A549 (cell line): ENCODE measurements at regions of chr2 and their contacts with region 1.

Region 1: GRCh38 chr2:191811807-191812602 is 34.9 kb downstream of the CAVIN2 start:
- DNase-seq: peak; percentile 31 to 65
- ATAC-seq: peak; percentile 95 to 98
- H3K4me3 ChIP-seq: no peak overlapping the region
- H3K27ac ChIP-seq: peak overlapping the region; percentile 48 to 58; a peak in 4 of 6 replicates
- H3K4me1 ChIP-seq: peaks cover 5% of the 10 kb centered on the region; the same call in 1 of the 3 replicates
- CTCF ChIP-seq: peak; percentile 95
- EP300 ChIP-seq: no peak
- POLR2A ChIP-seq: no peak
- RAD21 ChIP-seq: peak; percentile 99

Region 2: DNA sequence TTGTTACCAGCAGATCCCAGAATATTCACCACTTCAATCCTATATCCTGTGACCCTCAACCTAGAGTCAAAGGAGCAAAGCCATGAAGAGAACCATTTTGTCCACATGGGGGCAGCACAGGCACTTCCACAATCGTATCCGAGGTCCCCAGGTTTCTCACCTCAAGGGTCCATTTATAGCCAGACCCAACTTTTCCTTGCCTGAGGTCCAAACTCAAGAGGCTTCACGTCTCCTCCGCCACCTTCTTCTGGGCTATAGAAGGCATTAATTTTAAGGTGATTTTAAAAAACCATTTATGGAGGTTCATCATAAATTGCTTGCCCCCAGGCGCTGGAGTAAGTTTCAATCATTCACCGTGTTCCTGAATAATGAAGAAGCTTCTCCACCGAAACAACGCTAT is 245.7 kb before region 1 on chr2:
- CTCF ChIA-PET with region 1: interaction called, 11 read pairs
- POLR2A ChIA-PET with region 1: no interaction called
- DNase-seq: peak; percentile 61 to 67
- ATAC-seq: peak; percentile 82 to 92
- H3K4me3 ChIP-seq: no peak overlapping the region
- H3K27ac ChIP-seq: peak overlapping the region in 1 of 2 experiments; percentile 49; a peak in 2 of 6 replicates
- H3K4me1 ChIP-seq: peaks cover 7% of the 10 kb centered on the region
- CTCF ChIP-seq: peak; percentile 89
- EP300 ChIP-seq: no peak
- POLR2A ChIP-seq: no peak
- RAD21 ChIP-seq: peak; percentile 84 to 85

Region 3: GRCh38 chr2:191824398-191824797 is 12.4 kb after region 1 on chr2:
- CTCF ChIA-PET with region 1: interaction called, 32 read pairs
- POLR2A ChIA-PET with region 1: no interaction called
- DNase-seq: no peak
- ATAC-seq: no peak
- H3K4me3 ChIP-seq: no peak overlapping the region
- H3K27ac ChIP-seq: no peak overlapping the region
- H3K4me1 ChIP-seq: no peaks in the 10 kb centered on the region
- CTCF ChIP-seq: no peak
- EP300 ChIP-seq: no peak
- POLR2A ChIP-seq: no peak
- RAD21 ChIP-seq: no peak

Region 4: DNA sequence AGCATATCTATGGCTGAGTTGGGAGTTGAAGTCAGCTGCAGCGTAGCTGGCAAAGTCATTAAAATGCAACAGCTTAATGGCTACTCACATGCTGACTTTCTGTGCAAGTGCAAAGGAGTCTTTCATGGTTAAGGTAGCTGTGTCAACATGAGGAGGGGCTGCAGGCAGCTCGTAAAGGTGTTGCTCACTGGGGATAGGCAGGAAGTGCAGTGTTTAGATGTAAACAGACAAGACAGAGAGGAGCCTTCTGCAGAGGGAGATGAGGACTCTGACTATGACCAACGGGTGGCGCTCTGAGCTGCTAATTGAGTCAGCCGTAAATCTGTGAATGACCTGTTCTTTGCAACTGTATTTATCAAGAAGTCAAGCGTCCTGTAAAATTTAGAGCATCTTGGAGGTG is 57.2 kb after region 1 on chr2:
- CTCF ChIA-PET with region 1: interaction called, 15 read pairs
- POLR2A ChIA-PET with region 1: no interaction called
- DNase-seq: peak in 1 of 2 experiments; percentile 75
- ATAC-seq: peak in 1 of 2 experiments; percentile 41; a peak in 2 of 6 replicates
- H3K4me3 ChIP-seq: no peak overlapping the region
- H3K27ac ChIP-seq: peak overlapping the region; percentile 87 to 91
- H3K4me1 ChIP-seq: peaks cover 57% of the 10 kb centered on the region
- CTCF ChIP-seq: no peak
- EP300 ChIP-seq: no peak
- POLR2A ChIP-seq: no peak
- RAD21 ChIP-seq: peak in 1 of 2 experiments; percentile 71; a peak in 2 of 5 replicates

Region 5: GRCh38 chr2:192155511-192156118 is 343.6 kb after region 1 on chr2:
- CTCF ChIA-PET with region 1: interaction called, 227 read pairs
- POLR2A ChIA-PET with region 1: interaction called, 3 read pairs
- DNase-seq: no peak
- ATAC-seq: no peak
- H3K4me3 ChIP-seq: no peak overlapping the region
- H3K27ac ChIP-seq: no peak overlapping the region
- H3K4me1 ChIP-seq: no peaks in the 10 kb centered on the region
- CTCF ChIP-seq: no peak
- EP300 ChIP-seq: no peak
- POLR2A ChIP-seq: no peak
- RAD21 ChIP-seq: no peak